Ascending aorta (tissue), 2 donors: ENCODE measurements at regions of chr1 and their contacts with region 1.

Region 1: GRCh38 chr1:110106013-110106941 is 6.0 kb upstream of the UBL4B start:
- DNase-seq: peak in 1 of 2 donors; percentile 78
- H3K4me3 ChIP-seq: no peak overlapping the region
- H3K27ac ChIP-seq: no peak overlapping the region
- H3K4me1 ChIP-seq: no peaks in the 10 kb centered on the region
- H3K27me3 ChIP-seq: no peaks in the 10 kb centered on the region
- CTCF ChIP-seq: peak; percentile 73 to 95 (median 95)

Region 2: GRCh38 chr1:109788695-109789521 is 317.4 kb before region 1 on chr1:
- intact Hi-C with region 1: no loop called
- DNase-seq: peak; percentile 5 to 50
- H3K4me3 ChIP-seq: no peak overlapping the region
- H3K27ac ChIP-seq: no peak overlapping the region
- H3K4me1 ChIP-seq: peaks cover 10 to 47% of the 10 kb centered on the region in 2 donors
- H3K27me3 ChIP-seq: no peaks in the 10 kb centered on the region
- CTCF ChIP-seq: no peak

Region 3: GRCh38 chr1:110034451-110035235 is 71.6 kb before region 1 on chr1 and contains the start of gene STRIP1:
- intact Hi-C with region 1: loop called (anchors 1 kb)
- DNase-seq: peak; percentile 77 to 97
- H3K4me3 ChIP-seq: peak within 1 kb of the TSS; percentile 86 to 96
- H3K27ac ChIP-seq: peak within 1 kb of the TSS; percentile 90 to 92
- H3K4me1 ChIP-seq: peaks cover 0 to 6% of the 10 kb centered on the region in 2 donors
- H3K27me3 ChIP-seq: no peaks in the 10 kb centered on the region
- CTCF ChIP-seq: no peak
- total RNA-seq, gene STRIP1: 20.0 TPM

Region 4: DNA sequence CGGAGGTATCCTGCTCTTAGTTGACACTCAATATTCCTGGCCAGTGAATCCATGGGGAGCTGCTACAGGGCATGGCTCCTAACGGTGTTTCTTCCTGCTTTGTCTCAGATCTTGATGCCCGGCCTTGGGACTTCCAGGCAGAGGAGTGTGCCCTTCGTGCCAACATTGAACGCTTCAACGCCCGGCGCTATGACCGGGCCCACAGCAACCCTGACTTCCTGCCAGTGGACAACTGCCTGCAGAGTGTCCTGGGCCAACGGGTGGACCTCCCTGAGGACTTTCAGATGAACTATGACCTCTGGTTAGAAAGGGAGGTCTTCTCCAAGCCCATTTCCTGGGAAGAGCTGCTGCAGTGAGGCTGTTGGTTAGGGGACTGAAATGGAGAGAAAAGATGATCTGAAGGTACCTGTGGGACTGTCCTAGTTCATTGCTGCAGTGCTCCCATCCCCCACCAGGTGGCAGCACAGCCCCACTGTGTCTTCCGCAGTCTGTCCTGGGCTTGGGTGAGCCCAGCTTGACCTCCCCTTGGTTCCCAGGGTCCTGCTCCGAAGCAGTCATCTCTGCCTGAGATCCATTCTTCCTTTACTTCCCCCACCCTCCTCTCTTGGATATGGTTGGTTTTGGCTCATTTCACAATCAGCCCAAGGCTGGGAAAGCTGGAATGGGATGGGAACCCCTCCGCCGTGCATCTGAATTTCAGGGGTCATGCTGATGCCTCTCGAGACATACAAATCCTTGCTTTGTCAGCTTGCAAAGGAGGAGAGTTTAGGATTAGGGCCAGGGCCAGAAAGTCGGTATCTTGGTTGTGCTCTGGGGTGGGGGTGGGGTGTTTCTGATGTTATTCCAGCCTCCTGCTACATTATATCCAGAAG is 52.5 kb before region 1 on chr1:
- intact Hi-C with region 1: loop called (anchors 1 kb)
- DNase-seq: peak in 1 of 2 donors; percentile 74
- H3K4me3 ChIP-seq: no peak overlapping the region
- H3K27ac ChIP-seq: no peak overlapping the region
- H3K4me1 ChIP-seq: no peaks in the 10 kb centered on the region
- H3K27me3 ChIP-seq: no peaks in the 10 kb centered on the region
- CTCF ChIP-seq: peak; percentile 72 to 94 (median 91)

Region 5: GRCh38 chr1:110087812-110088738 is 18.2 kb before region 1 on chr1:
- intact Hi-C with region 1: loop called (anchors 1 kb)
- DNase-seq: no peak
- H3K4me3 ChIP-seq: no peak overlapping the region
- H3K27ac ChIP-seq: no peak overlapping the region
- H3K4me1 ChIP-seq: no peaks in the 10 kb centered on the region
- H3K27me3 ChIP-seq: no peaks in the 10 kb centered on the region
- CTCF ChIP-seq: peak; percentile 44 to 68 (median 66)